ENCODE measurements at regions of chr12 and their contacts with region 1.

Region 1: GRCh38 chr12:120356567-120357030 is 12.4 kb downstream of the MSI1 start:
- DNase-seq: peak; percentile 66
- H3K4me3 ChIP-seq: no peak overlapping the region
- H3K27ac ChIP-seq: no peak overlapping the region
- H3K4me1 ChIP-seq: no peaks in the 10 kb centered on the region
- H3K27me3 ChIP-seq: no peaks in the 10 kb centered on the region
- CTCF ChIP-seq: peak; percentile 63 to 92 (median 88)
- POLR2A ChIP-seq: no peak

Region 2: DNA sequence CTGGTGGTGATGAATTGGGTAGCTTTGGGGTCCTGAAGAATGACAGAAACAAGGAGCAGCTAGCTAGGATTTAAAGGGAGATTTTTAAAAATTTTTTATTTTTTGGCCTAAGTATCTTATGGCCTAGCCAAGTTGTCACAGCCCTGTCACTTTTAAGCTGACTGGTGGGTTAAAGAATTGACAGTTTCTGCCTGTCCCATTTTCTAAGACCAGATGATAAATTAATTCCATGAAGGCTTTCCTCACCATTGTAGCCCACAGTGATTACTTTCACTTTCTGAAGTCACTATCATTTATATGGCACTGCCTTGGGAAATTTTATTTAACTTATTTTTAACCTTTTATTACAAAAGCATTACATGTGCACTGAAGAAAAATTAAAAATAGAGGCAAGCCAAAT is 324.4 kb before region 1 on chr12:
- intact Hi-C with region 1: no loop called
- DNase-seq: no peak
- H3K4me3 ChIP-seq: no peak overlapping the region
- H3K27ac ChIP-seq: no peak overlapping the region
- H3K4me1 ChIP-seq: no peaks in the 10 kb centered on the region
- H3K27me3 ChIP-seq: no peaks in the 10 kb centered on the region
- CTCF ChIP-seq: no peak
- POLR2A ChIP-seq: no peak

Region 3: DNA sequence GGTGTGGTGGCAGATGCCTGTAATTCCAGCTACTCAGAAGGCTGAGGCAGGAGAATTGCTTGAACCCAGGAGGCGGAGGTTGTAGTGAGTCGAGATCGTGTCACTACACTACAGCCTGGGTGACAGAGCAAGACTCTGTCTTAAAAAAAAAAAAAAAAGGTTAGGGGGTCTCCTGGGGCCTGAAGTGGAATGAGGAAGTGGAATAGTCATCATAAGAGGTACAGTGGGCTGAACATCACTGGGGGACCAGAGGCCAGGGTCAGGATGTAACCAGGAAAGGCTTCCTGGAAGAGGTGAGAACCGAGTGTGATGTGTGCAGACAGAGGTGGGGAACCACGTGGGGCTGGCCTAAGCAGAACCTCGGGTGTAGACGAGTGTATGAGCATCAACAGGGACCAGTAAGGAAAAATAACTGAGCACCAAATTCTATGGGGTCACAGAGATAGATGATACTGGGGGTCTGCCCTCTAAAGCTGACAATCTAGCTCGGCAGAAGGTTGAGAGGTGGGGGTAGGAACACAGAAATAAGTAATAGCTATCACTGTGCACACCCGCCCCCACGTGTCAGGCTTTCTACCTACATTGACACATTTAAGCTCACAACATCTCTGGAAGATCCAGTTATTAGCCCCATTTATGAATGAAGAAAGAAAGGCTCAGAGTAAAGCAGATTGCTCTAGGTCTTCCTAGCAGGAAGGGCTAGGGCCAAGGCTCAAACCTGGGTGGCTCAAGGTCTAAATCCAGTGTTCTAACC is 76.3 kb after region 1 on chr12:
- intact Hi-C with region 1: loop called (anchors 1 kb)
- DNase-seq: no peak
- H3K4me3 ChIP-seq: no peak overlapping the region
- H3K27ac ChIP-seq: no peak overlapping the region
- H3K4me1 ChIP-seq: no peaks in the 10 kb centered on the region
- H3K27me3 ChIP-seq: no peaks in the 10 kb centered on the region
- CTCF ChIP-seq: no peak
- POLR2A ChIP-seq: no peak